Heart left ventricle (tissue), 16 donors: ENCODE measurements at regions of chr10 and their contacts with region 1.

Region 1: GRCh38 chr10:63217120-63217605 is 84.0 kb downstream of the NRBF2 start:
- DNase-seq: no peak
- ATAC-seq: peak in 3 of 4 donors; percentile 75 to 84 (median 79)
- H3K4me3 ChIP-seq: no peak overlapping the region
- H3K27ac ChIP-seq: peak overlapping the region in 3 of 12 donors; percentile 7 to 24 (median 8)
- H3K4me1 ChIP-seq: peaks cover 0 to 63% (median 25%) of the 10 kb centered on the region in 12 donors
- H3K27me3 ChIP-seq: no peaks in the 10 kb centered on the region
- CTCF ChIP-seq: peak; percentile 55 to 80 (median 74)
- POLR2A ChIP-seq: no peak

Region 2: GRCh38 chr10:63261496-63261895 is 44.3 kb after region 1 on chr10:
- intact Hi-C with region 1: loop called in 8 of 10 experiments (anchors 5 to 10 kb)
- DNase-seq: no peak
- ATAC-seq: no peak
- H3K4me3 ChIP-seq: peak overlapping the region in 1 of 12 donors; percentile 6
- H3K27ac ChIP-seq: peak overlapping the region in 3 of 12 donors; percentile 41 to 89 (median 80)
- H3K4me1 ChIP-seq: peaks cover 11 to 85% (median 74%) of the 10 kb centered on the region in 12 donors
- H3K27me3 ChIP-seq: no peaks in the 10 kb centered on the region
- CTCF ChIP-seq: no peak
- POLR2A ChIP-seq: no peak

Region 3: DNA sequence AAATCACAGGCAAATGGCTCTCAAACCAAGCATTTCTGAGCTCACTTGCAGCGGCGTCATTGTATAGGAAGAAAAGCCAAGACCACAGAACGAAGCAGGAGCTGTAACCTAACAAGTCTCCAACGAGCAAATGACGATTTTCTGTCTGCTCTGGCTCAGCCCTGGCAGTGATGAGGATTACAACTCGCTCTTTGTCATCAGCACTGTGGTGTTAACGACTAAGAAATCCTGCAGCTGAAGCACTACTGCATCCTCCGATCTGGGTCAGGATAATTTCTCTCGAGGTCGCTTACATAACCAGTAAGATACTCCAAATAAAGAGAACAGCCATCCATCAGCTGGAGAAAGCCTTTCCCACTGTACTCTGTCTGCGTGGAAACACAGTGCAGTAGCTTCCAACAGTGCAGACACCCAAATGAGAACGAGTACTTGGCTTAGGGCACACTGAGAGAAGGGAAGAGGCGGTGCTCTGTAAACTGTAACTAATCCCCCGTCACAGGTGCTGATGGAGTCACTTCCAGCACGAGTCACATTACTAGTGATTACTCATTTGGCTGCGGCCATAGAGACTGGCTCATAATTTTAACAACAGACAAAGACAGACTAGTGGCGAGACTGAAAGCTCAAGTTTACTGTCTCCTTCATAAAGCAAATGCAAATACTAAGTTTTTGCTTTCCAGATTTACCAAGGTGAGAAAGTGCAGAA is 51.8 kb after region 1 on chr10:
- intact Hi-C with region 1: loop called in 9 of 10 experiments (anchors 2 to 10 kb)
- DNase-seq: peak in 4 of 5 donors; percentile 87 to 88 (median 88)
- ATAC-seq: peak; percentile 96 to 99 (median 98)
- H3K4me3 ChIP-seq: peak overlapping the region; percentile 30 to 68 (median 58)
- H3K27ac ChIP-seq: peak overlapping the region; percentile 84 to 96 (median 88)
- H3K4me1 ChIP-seq: peaks cover 4 to 38% (median 19%) of the 10 kb centered on the region in 12 donors
- H3K27me3 ChIP-seq: no peaks in the 10 kb centered on the region
- CTCF ChIP-seq: peak in 10 of 12 donors; percentile 13 to 49 (median 38)
- POLR2A ChIP-seq: peak in 1 of 2 donors; percentile 94

Region 4: DNA sequence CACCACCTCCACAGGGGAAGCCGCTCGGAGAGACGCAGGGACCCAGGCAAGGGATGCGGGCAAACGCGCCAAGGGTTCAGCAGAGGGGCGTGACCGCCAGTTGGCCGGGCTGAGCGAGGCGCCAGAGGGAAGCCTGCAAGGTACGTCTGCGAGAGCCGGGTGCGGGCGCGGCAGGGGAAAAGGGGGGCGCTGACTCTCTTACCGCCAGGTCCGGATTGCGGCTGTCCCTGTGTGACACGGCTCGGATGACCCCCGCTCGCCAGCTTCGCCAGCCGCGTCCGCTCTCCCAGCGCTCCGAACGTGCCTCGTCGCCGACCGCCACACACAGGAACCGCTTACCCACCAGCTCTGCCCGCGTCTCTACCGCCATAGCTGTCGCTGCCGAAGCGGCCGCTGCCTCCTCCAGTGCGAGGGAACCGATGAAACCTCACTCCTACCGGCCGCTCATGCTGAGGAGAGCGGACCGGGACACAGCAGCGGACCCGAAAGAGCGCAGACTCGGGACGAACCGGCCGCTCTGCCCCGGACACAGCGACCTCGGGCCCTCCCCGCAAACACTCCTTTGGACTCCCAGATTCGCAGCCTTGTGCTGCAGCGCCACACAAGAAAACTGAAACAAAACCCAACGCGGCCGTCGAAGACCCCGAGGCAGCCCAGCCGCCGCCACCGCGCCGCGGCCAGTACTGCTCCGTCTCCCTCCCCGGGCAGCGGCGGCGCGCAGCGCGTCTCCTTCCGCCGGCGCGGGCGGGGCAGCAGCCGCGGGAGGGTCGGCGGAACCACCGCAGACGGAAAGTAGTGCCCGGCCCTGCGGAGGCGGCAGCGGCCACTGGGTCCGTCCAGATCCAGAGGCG is 248.4 kb after region 1 on chr10 and contains the start of gene JMJD1C:
- intact Hi-C with region 1: loop called in 6 of 10 experiments (anchors 5 to 10 kb)
- DNase-seq: peak; percentile 84 to 91 (median 86)
- ATAC-seq: peak; percentile 69 to 94 (median 90)
- H3K4me3 ChIP-seq: peak within 1 kb of the TSS; percentile 65 to 93 (median 86)
- H3K27ac ChIP-seq: peak within 1 kb of the TSS; percentile 87 to 96 (median 92)
- H3K4me1 ChIP-seq: peaks cover 0 to 40% (median 18%) of the 10 kb centered on the region in 12 donors
- H3K27me3 ChIP-seq: no peaks in the 10 kb centered on the region
- CTCF ChIP-seq: peak in 2 of 12 donors; percentile 7 to 40
- POLR2A ChIP-seq: peak in 1 of 2 donors; percentile 60
- total RNA-seq, gene JMJD1C: 27.0 to 54.6 (median 42.7) TPM

Region 5: DNA sequence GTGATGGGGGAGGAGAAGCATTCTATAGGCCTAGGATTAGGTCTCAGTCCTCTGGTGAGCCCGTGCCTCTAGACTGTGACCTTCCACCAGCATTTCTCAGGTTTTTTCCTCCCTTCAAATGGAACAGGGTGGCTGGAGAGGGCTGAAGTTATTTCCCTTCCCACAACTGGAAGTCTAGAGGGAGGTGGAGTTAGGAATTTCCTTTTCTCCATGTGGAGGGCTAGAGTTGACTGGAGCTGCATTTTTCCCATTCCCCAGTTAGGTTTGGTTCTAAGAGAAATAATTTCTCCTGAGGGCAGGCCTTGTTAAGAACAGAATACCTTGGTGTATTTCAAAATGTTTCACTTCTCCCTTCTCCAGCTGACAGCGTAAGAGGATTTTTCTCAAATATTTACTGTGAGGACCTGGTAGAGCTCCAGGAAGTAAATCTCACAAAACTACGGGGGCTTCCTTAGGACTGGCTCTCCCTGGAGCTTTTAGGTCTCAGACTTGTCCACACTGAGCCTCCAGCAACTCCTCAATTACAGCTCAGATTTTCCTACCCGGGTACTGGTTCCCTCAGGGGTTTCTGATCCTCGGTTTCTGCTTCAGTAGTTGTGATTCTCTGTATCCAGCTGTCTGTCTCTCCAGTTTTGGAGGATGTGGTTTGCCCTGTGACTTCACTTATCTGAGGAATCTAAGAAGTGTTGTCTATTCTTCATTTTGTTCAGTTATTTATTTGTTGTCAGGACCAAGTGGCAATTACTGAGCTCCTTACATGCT is 298.0 kb after region 1 on chr10:
- intact Hi-C with region 1: loop called in 2 of 10 experiments (anchors 5 kb)
- DNase-seq: no peak
- ATAC-seq: peak; percentile 14 to 85 (median 60)
- H3K4me3 ChIP-seq: peak overlapping the region in 3 of 12 donors; percentile 6 to 14 (median 13)
- H3K27ac ChIP-seq: peak overlapping the region in 11 of 12 donors; percentile 48 to 82 (median 67)
- H3K4me1 ChIP-seq: peaks cover 5 to 58% (median 44%) of the 10 kb centered on the region in 12 donors
- H3K27me3 ChIP-seq: no peaks in the 10 kb centered on the region
- CTCF ChIP-seq: no peak
- POLR2A ChIP-seq: no peak

Region 6: DNA sequence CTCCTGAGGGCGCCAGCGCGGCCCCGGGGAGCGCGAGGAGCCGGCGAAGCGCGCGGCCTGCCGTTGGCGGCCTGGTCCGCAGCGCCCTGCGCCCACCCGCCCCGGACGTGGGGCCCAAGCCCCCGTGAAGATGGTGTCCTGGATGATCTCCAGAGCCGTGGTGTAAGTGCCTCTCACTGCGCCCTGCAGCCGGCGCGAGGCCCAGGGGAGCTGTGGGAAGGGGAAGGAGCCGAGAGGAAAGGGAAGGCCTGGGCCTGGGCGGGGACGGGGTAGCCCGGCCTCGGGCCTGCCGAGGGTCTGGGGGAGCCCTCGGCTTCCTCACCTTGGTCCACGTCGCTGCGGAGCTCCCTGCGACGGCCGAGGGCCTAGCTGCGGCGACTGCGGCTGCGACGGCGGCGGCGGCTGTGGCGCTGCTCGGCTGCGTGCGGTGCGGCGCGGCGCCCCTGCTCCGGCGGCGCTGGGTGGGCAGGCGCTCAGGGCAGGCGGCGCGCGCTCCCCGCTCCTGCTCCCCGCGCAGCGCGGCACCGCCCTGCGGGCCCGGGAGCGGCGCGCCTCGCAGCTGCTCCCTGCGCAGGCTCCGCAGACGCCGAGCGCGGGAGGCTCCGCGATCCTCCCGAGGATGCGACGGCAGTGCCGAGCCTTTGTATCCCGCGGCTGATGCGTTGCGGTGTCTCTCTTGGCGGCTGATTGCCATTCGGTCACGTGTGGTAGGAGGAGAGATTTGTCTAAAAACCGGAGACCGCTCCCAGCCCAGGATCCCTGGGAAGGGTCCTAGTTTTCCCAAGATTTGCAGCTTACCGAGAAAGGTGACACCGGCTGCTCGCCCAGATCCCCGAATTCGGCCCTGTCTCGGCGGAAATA is 304.5 kb after region 1 on chr10:
- intact Hi-C with region 1: loop called in 2 of 10 experiments (anchors 5 kb)
- DNase-seq: peak; percentile 69 to 88 (median 76)
- ATAC-seq: peak; percentile 15 to 91 (median 82)
- H3K4me3 ChIP-seq: peak overlapping the region; percentile 63 to 91 (median 78)
- H3K27ac ChIP-seq: peak overlapping the region; percentile 97 to 99 (median 98)
- H3K4me1 ChIP-seq: peaks cover 4 to 64% (median 49%) of the 10 kb centered on the region in 12 donors
- H3K27me3 ChIP-seq: no peaks in the 10 kb centered on the region
- CTCF ChIP-seq: no peak
- POLR2A ChIP-seq: peak in 1 of 2 donors; percentile 35

Region 7: DNA sequence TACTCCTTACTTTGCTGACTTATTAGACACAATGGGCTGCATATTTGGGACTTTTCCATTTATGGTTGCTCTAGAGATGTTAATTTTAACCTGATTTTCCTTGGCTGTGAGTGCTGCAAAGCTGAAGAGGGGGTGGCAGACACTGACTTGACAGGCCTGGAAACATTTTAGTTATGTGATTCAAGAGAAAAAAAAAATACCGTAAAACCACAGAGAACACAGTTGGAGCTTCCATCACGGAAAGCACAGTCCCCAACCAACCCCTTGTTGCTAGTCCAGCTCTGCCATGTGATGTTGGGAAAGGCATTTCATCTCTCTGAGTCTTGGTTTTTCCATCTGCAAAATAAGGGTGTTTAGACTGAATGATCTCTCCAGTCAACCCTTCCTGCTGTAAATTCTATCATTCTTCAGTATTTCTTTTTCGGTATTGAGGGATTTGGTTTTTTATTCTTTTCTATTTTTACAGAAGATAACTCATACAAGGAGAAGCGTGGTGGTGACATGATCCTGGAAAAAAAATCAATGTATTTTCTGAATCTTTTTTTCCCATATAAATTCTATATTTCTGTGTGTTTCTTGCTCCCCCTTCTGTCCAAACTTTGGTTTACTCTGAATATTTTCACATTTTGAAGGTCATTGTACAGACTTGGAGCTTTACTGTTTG is 550.1 kb after region 1 on chr10:
- intact Hi-C with region 1: loop called in 1 of 10 experiments (anchors 5 kb)
- DNase-seq: no peak
- ATAC-seq: peak; percentile 22 to 50 (median 42)
- H3K4me3 ChIP-seq: no peak overlapping the region
- H3K27ac ChIP-seq: peak overlapping the region in 10 of 12 donors; percentile 2 to 55 (median 30)
- H3K4me1 ChIP-seq: peaks cover 0 to 17% (median 4%) of the 10 kb centered on the region in 12 donors
- H3K27me3 ChIP-seq: no peaks in the 10 kb centered on the region
- CTCF ChIP-seq: peak; percentile 17 to 60 (median 44)
- POLR2A ChIP-seq: no peak